ENCODE measurements at regions of chr1 and their contacts with region 1.

Region 1: DNA sequence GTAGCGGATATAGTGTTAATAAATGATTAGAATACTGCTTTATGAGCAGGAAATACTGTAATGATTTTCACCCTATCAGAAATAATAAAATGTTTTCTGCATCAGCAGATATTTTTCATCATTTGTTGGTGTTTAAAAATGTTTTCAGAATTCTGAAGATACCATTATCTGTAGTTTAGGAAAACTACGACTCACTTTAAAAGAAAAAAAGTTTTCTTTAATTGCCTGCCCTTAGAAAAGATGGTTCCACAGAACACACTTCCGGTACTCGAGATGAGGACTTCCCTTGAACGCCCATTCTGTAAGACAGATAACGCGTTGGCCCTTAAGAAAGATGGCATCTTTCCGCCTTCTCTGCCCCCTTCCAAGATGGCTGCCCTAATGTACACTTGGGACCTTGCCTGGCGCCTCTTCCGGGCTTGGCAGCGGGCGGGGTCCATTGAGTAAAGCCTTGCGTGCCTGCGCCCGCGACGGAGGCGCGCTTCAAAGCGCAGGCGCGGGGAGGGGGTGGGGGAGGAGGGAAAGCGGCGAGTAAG is at the start of gene SZRD1:
- DNase-seq: peak; percentile 97
- H3K4me3 Mint-ChIP-seq: peak within 1 kb of the TSS; percentile 93
- H3K27ac Mint-ChIP-seq: peak within 1 kb of the TSS; percentile 98
- H3K4me1 Mint-ChIP-seq: peaks cover 35% of the 10 kb centered on the region
- H3K27me3 Mint-ChIP-seq: no peaks in the 10 kb centered on the region
- total RNA-seq, gene SZRD1: 169 to 179 TPM

Region 2: DNA sequence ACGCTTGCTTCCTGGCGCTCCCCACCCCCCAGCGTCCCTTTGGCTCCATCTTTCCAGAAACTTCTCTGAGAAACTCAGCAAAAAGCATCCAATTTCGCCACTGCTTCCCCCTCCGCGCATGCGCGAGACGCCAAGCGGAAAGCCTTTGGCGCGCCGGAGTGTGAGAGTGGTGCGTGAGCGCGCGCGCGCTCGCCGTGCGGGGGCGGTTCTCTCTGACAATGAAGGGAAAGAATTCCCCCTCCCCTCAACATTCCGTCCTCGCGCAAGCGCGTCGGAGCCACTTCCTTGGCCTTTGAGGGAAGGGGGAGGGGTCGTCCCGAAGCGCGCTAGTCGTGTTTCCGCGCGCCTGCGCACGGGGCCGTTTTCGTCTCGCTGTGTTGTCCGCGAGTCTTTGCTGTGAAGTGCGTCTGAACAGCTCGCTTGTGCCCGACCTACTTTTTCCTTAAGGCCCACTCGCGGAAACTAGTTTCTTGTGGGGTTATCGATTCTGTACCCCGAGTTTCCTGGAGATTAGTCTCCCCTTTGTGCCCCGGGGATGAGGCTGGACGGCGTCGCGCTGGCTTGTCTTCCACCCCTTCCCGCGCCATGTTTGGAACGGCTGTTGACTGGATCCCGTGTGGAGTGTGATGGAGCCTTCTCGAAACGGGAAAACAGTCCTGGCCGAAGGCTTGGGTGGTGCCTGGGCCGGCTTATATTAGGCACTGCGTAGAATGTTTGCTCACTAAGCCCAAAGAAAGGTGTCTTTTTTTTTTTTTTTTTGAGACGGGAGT is 530.9 kb before region 1 on chr1:
- CTCF ChIA-PET with region 1: no interaction called
- intact Hi-C with region 1: loop called (anchors 2 kb)
- DNase-seq: peak; percentile 100
- H3K4me3 Mint-ChIP-seq: peak overlapping the region; percentile 86
- H3K27ac Mint-ChIP-seq: peak overlapping the region; percentile 95
- H3K4me1 Mint-ChIP-seq: peaks cover 27% of the 10 kb centered on the region
- H3K27me3 Mint-ChIP-seq: no peaks in the 10 kb centered on the region

Region 3: GRCh38 chr1:16167331-16168143 is 199.3 kb before region 1 on chr1:
- CTCF ChIA-PET with region 1: no interaction called
- intact Hi-C with region 1: loop called (anchors 10 kb)
- DNase-seq: peak; percentile 76
- H3K4me3 Mint-ChIP-seq: peak overlapping the region; percentile 60
- H3K27ac Mint-ChIP-seq: no peak overlapping the region
- H3K4me1 Mint-ChIP-seq: peaks cover 50% of the 10 kb centered on the region
- H3K27me3 Mint-ChIP-seq: no peaks in the 10 kb centered on the region

Region 4: GRCh38 chr1:16236511-16237342 is 130.1 kb before region 1 on chr1 and contains the start of gene CPLANE2:
- CTCF ChIA-PET with region 1: interaction called, 4 read pairs
- intact Hi-C with region 1: loop called (anchors 1 kb)
- DNase-seq: peak; percentile 98
- H3K4me3 Mint-ChIP-seq: peak within 1 kb of the TSS; percentile 84
- H3K27ac Mint-ChIP-seq: peak within 1 kb of the TSS; percentile 88
- H3K4me1 Mint-ChIP-seq: peaks cover 14% of the 10 kb centered on the region
- H3K27me3 Mint-ChIP-seq: no peaks in the 10 kb centered on the region
- total RNA-seq, gene CPLANE2: 2.7 to 4.0 TPM

Region 5: DNA sequence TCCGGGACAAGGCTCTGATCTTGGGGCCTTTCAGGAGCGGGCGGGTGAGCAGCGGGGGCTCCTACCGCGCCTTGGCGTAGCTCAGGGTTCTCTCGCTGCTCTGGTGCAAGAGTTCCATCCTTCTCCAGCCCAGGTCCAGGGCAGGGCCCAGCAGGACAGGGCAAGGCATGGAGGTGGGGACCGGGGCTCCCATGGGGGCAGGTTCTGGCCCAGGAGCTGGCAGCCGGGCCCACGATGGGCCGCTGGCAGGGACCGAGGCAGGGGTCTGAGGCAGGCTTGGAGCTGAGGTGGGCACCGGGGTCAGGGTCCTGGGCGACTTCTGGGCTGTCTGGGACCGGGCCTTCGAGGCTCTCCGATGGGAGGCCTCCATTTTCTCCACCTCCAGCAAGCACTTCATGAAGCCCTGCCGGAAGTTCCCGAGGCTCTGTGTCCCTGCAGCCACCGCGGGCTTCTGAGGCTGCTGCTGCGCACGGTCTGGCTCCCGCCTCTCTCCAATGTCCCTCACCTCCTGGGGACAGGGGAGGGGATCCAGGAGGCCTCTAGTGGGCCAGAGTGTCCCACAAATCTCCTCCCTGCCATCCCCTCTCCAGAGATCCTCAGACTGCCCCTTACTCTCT is 42.9 kb after region 1 on chr1:
- CTCF ChIA-PET with region 1: no interaction called
- intact Hi-C with region 1: no loop called
- DNase-seq: no peak
- H3K4me3 Mint-ChIP-seq: no peak overlapping the region
- H3K27ac Mint-ChIP-seq: no peak overlapping the region
- H3K4me1 Mint-ChIP-seq: no peaks in the 10 kb centered on the region
- H3K27me3 Mint-ChIP-seq: no peaks in the 10 kb centered on the region

Region 6: GRCh38 chr1:16420424-16421118 is 53.8 kb after region 1 on chr1:
- CTCF ChIA-PET with region 1: no interaction called
- intact Hi-C with region 1: loop called (anchors 1 kb)
- DNase-seq: peak; percentile 87
- H3K4me3 Mint-ChIP-seq: peak overlapping the region; percentile 10
- H3K27ac Mint-ChIP-seq: peak overlapping the region; percentile 67
- H3K4me1 Mint-ChIP-seq: peaks cover 30% of the 10 kb centered on the region
- H3K27me3 Mint-ChIP-seq: no peaks in the 10 kb centered on the region

Region 7: DNA sequence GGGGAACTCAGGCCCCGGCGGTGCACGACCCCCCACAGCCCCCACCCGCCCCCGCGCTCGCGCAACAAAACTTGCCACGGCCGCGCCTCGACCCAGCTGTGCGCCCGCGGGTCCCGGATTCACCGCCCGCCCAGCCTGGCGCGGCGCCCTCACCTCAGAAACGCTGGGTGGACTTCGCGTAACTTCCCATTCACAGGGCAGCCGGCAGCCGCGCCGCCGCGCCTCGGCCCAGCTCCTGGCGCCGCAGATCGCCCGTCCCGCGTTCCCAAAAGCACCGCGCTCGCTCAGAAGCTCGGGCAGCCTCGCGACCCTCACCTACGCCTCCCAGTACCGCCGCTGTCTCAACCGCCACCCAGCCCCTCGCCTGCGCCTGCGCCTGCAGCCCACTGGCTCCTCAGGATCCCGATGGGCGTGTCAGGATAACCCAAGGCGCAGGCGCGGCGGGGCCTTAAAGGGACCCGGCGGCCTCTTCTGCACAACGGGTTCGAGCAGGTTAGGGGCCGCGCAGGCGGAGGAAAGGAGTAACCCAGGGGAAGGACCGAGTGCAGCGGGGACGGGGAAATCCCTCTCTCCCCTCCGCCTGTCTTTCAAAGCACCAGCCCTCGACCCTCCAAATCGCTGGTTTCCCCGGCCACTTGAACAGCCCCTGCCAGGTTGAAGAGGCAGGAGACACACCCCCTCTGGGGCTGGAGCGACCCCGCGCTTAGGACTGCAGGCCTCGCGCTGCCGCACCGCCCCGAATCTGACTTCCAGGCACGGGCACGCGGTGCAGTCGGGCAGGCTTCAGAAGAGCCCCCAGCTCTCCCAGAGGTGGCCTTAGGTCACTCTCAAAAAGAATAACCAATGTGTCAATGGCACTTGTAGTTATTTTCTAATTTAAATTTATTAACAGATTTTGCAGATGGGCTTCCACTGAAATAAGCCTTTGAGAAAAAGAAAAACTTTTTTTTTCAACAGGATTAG is 246.7 kb after region 1 on chr1 and contains the start of gene NBPF1:
- CTCF ChIA-PET with region 1: no interaction called
- intact Hi-C with region 1: loop called (anchors 5 kb)
- DNase-seq: peak; percentile 92
- H3K4me3 Mint-ChIP-seq: no peak within 1 kb of the TSS
- H3K27ac Mint-ChIP-seq: no peak within 1 kb of the TSS
- H3K4me1 Mint-ChIP-seq: no peaks in the 10 kb centered on the region
- H3K27me3 Mint-ChIP-seq: no peaks in the 10 kb centered on the region
- total RNA-seq, gene NBPF1: 1.6 to 1.9 TPM